WTC11 (cell line): ENCODE measurements at regions of chr16 and their contacts with region 1.

Region 1: GRCh38 chr16:13848795-13849194 is 71.2 kb upstream of the ERCC4 start:
- DNase-seq: no peak
- ATAC-seq: peak; percentile 32; the same call in 1 of the 2 replicates
- H3K4me3 Mint-ChIP-seq: no peak overlapping the region
- H3K27ac Mint-ChIP-seq: no peak overlapping the region
- H3K4me1 Mint-ChIP-seq: no peaks in the 10 kb centered on the region
- H3K27me3 Mint-ChIP-seq: no peaks in the 10 kb centered on the region
- CTCF ChIP-seq: no peak

Region 2: GRCh38 chr16:13779676-13780075 is 69.1 kb before region 1 on chr16:
- CTCF ChIA-PET with region 1: no interaction called
- POLR2A ChIA-PET with region 1: no interaction called
- DNase-seq: no peak
- ATAC-seq: no peak
- H3K4me3 Mint-ChIP-seq: no peak overlapping the region
- H3K27ac Mint-ChIP-seq: no peak overlapping the region
- H3K4me1 Mint-ChIP-seq: peaks cover 24% of the 10 kb centered on the region
- H3K27me3 Mint-ChIP-seq: peaks cover 9% of the 10 kb centered on the region
- CTCF ChIP-seq: no peak

Region 3: DNA sequence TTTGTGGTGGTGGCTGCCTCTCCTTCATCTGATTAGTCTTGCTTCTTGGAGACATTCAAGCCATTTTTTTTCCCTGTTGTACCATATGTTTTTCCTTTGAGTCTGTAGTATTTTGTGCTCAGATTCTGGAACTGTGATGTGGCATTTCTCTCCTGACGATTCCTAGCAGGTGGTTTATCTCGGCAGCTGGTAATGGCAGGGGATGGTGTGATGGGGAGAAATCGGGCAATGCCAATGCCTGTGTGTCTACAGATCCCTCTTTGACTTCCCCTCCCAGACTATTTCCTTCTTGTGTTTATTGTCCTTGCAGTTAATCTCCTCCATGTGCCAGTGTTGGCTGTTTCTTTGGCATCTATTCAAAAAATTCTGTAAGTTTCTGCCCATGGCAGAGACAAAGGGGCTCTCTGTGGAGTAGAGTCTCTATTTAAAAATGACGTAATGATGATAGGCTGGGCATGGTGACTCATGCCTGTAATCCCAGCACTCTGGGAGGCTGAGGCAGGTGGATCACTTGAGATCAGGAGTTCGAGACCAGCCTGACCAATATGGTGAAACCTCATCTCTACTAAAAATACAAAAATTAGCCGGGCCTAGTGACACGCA is 19.0 kb before region 1 on chr16:
- CTCF ChIA-PET with region 1: interaction called, 12 read pairs
- POLR2A ChIA-PET with region 1: no interaction called
- DNase-seq: no peak
- ATAC-seq: no peak
- H3K4me3 Mint-ChIP-seq: no peak overlapping the region
- H3K27ac Mint-ChIP-seq: no peak overlapping the region
- H3K4me1 Mint-ChIP-seq: peaks cover 23% of the 10 kb centered on the region
- H3K27me3 Mint-ChIP-seq: peaks cover 6% of the 10 kb centered on the region
- CTCF ChIP-seq: no peak

Region 4: DNA sequence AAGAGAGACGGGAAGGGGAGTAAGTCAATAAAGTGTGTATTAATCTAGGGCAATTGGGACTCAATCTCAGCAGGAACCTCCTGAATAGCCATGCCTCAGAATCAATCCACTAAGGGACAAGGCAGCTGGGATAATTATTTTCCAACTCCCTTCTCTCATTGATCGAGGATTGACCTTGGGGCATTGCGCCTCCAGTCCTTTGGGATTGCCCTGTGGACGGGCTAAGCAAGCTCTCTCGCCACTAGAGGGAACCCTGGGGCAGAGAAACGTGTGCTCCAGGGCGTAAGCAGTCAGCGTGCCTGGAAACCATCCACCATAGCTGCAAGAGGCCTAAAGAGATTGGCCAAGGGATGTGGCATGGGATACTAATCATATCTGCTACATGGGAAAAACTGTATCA is 17.3 kb after region 1 on chr16:
- CTCF ChIA-PET with region 1: interaction called, 17 read pairs
- POLR2A ChIA-PET with region 1: no interaction called
- DNase-seq: peak; percentile 85
- ATAC-seq: peak; percentile 100
- H3K4me3 Mint-ChIP-seq: no peak overlapping the region
- H3K27ac Mint-ChIP-seq: no peak overlapping the region
- H3K4me1 Mint-ChIP-seq: no peaks in the 10 kb centered on the region
- H3K27me3 Mint-ChIP-seq: peaks cover 2% of the 10 kb centered on the region; the same call in 1 of the 2 replicates
- CTCF ChIP-seq: peak; percentile 56; the same call in 1 of the 2 replicates

Region 5: DNA sequence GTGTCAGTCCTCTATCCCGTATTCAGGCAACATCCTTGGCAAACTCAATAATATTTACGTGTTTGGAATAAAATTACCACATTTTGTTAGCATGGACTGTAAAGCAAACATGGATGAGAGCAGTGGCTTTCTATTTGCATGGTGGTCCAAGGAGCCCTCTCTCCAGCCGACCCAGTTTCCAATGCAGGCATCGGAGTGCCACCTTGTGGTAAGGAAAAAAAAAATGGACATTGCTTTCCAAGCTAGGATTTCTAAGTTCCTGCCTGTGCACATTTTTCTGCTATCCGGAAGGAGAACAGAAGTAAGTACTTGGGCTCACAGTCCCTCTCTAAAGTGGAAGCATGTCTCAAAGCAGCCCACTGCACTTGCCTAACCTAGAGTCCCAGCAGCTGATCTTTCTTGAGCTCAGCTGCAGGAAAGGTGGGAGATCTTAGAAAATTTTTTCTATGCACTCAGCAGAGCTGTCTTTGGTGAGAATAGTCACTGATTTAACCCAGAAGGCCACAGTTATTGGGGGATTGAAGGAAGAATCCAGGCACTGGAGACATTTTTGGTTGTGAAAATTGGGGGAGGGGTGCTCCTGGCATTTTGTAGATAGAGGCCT is 25.1 kb after region 1 on chr16:
- CTCF ChIA-PET with region 1: interaction called, 14 read pairs
- POLR2A ChIA-PET with region 1: no interaction called
- DNase-seq: peak; percentile 36
- ATAC-seq: peak; percentile 75
- H3K4me3 Mint-ChIP-seq: no peak overlapping the region
- H3K27ac Mint-ChIP-seq: no peak overlapping the region
- H3K4me1 Mint-ChIP-seq: no peaks in the 10 kb centered on the region
- H3K27me3 Mint-ChIP-seq: no peaks in the 10 kb centered on the region; the same call in none of the 2 replicates
- CTCF ChIP-seq: peak; percentile 42

Region 6: DNA sequence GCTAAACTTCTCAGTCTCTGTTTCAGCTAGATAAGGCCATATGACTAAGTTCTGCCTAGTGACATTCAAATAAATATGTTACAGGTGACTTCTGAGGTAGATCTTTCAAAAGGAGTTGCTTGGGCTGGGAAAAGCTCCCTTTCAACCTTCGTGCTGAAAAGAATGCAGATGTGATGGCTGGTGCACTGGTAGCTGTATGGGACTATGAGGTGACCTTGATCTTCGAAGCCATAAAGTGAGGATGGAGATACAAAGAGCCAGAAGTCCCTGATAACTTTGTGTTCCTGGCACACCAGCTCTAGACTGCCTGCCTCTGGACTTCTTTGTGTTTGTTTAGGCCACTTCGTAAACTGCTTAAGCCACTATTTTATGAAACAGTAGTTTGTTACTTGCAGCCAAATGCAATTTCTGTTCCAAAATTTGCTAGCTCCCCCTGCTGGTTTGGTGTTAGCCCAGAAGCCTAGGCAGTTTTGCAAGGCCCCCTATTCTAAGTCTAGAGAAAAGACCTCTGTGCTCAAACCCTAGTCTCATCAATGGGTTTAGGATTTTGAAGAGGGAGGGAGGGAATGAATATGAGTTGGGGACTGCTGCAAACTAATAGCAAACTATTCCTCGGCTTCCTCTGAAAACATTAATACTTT is 47.9 kb after region 1 on chr16:
- CTCF ChIA-PET with region 1: no interaction called
- POLR2A ChIA-PET with region 1: no interaction called
- DNase-seq: no peak
- ATAC-seq: no peak
- H3K4me3 Mint-ChIP-seq: no peak overlapping the region
- H3K27ac Mint-ChIP-seq: no peak overlapping the region
- H3K4me1 Mint-ChIP-seq: no peaks in the 10 kb centered on the region
- H3K27me3 Mint-ChIP-seq: no peaks in the 10 kb centered on the region; the same call in 1 of the 2 replicates
- CTCF ChIP-seq: no peak